B cell (primary cell): ENCODE measurements at regions of chr11 and their contacts with region 1.

Region 1: DNA sequence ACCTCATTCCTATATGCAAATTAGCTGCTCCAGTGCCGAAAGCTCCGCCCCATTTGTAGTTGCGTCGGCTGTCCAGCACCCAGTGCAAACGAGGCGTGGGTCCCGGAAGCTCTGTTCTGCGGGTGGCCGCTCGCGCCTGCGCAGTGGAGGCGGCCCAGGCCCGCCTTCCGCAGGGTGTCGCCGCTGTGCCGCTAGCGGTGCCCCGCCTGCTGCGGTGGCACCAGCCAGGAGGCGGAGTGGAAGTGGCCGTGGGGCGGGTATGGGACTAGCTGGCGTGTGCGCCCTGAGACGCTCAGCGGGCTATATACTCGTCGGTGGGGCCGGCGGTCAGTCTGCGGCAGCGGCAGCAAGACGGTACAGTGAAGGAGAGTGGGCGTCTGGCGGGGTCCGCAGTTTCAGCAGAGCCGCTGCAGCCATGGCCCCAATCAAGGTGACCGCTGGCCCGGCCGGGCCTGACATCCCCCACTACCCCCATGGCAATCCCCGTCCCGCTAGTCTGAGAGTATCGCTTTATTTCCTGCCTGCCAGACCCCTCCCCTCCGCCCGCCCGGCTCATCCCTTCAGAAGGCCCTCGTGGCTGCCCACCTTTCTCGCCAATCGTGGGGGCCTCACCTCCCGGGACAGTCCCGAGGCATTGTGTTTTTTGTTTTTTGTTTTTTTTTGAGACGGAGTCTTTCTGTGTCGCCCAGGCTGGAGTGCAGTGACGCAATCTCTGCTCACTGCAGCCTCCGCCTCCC is at the start of gene PRDX5:
- DNase-seq: peak; percentile 98
- ATAC-seq: peak; percentile 79
- H3K4me3 ChIP-seq: peak within 1 kb of the TSS; percentile 76 to 95 (median 81)
- H3K4me3 Mint-ChIP-seq: peak within 1 kb of the TSS; percentile 98
- H3K27ac ChIP-seq: peak within 1 kb of the TSS; percentile 99 to 100
- H3K27ac Mint-ChIP-seq: peak within 1 kb of the TSS; percentile 100
- H3K4me1 ChIP-seq: peaks cover 8 to 26% of the 10 kb centered on the region in 2 donors
- H3K4me1 Mint-ChIP-seq: peaks cover 32% of the 10 kb centered on the region
- H3K27me3 ChIP-seq: no peaks in the 10 kb centered on the region
- H3K27me3 Mint-ChIP-seq: no peaks in the 10 kb centered on the region
- CTCF ChIP-seq: peak; percentile 39
- total RNA-seq, gene PRDX5: 50.4 and 56.3 TPM in 2 replicates

Region 2: GRCh38 chr11:64284048-64284961 is 33.8 kb before region 1 on chr11 and contains the start of gene BAD:
- CTCF ChIA-PET with region 1: interaction called, 5 read pairs
- POLR2A ChIA-PET with region 1: interaction called, 14 read pairs
- intact Hi-C with region 1: loop called (anchors 1 kb)
- DNase-seq: peak; percentile 96
- ATAC-seq: peak; percentile 77
- H3K4me3 ChIP-seq: peak within 1 kb of the TSS; percentile 61 to 97 (median 90)
- H3K4me3 Mint-ChIP-seq: peak within 1 kb of the TSS; percentile 90
- H3K27ac ChIP-seq: peak within 1 kb of the TSS; percentile 100
- H3K27ac Mint-ChIP-seq: peak within 1 kb of the TSS; percentile 96
- H3K4me1 ChIP-seq: peaks cover 13 to 18% of the 10 kb centered on the region in 2 donors
- H3K4me1 Mint-ChIP-seq: peaks cover 20% of the 10 kb centered on the region
- H3K27me3 ChIP-seq: no peaks in the 10 kb centered on the region
- H3K27me3 Mint-ChIP-seq: no peaks in the 10 kb centered on the region
- CTCF ChIP-seq: no peak
- total RNA-seq, gene BAD: 24.0 and 25.0 TPM in 2 replicates

Region 3: DNA sequence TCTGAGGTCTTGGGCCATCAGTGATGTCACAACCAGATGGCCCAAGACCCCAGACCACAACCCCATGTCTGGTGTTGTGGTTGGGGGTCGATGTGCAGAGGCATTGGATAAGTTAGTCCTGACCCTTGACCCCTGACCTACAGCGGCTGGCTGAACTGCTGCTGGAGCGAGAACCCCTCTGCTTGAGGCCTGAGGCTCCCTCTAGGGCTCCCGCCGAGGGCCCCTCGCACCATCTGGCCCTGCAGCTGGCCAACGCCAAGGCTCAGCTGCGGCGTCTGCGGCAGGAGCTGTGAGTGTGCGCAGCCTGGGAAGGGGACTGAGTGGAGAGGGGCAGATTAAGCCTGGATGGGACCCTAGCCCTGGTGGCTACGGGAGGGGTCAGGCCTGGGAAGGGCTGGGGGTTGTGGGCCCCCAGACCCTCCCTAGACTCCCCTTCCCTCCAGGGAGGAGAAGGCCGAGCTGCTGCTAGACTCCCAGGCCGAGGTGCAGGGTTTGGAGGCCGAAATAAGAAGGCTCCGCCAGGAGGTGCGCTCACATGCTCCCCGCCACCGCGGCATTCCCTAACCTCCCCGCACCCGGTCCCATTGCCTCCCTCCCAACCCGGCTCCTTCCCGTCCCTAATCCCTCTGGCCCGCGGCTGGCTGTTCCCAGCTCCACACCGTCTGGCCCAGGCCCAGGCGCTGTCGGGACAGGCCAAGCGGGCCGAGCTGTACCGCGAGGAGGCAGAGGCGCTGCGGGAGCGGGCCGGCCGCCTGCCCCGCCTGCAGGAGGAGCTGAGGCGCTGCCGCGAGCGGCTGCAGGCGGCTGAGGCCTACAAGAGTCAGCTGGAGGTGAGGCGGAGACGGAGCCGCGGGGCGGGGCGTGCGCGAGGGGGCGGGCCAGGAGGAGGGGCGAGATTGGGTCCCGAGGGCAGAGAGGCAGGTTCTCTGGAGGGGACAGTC is 24.0 kb after region 1 on chr11:
- CTCF ChIA-PET with region 1: interaction called, 63 read pairs
- POLR2A ChIA-PET with region 1: interaction called, 50 read pairs
- intact Hi-C with region 1: loop called (anchors 1 kb)
- DNase-seq: peak; percentile 88
- ATAC-seq: peak; percentile 46
- H3K4me3 ChIP-seq: peak overlapping the region in 2 of 5 experiments; percentile 15 to 19
- H3K4me3 Mint-ChIP-seq: peak overlapping the region; percentile 89
- H3K27ac ChIP-seq: peak overlapping the region in 1 of 2 donors; percentile 12
- H3K27ac Mint-ChIP-seq: no peak overlapping the region
- H3K4me1 ChIP-seq: peaks cover 30 to 39% of the 10 kb centered on the region in 2 donors
- H3K4me1 Mint-ChIP-seq: peaks cover 50% of the 10 kb centered on the region
- H3K27me3 ChIP-seq: no peaks in the 10 kb centered on the region
- H3K27me3 Mint-ChIP-seq: no peaks in the 10 kb centered on the region
- CTCF ChIP-seq: peak; percentile 43

Region 4: GRCh38 chr11:64448599-64449556 is 130.8 kb after region 1 on chr11:
- CTCF ChIA-PET with region 1: interaction called, 28 read pairs
- POLR2A ChIA-PET with region 1: no interaction called
- intact Hi-C with region 1: loop called (anchors 1 kb)
- DNase-seq: peak; percentile 80
- ATAC-seq: peak; percentile 61
- H3K4me3 ChIP-seq: peak overlapping the region; percentile 52 to 92 (median 55)
- H3K4me3 Mint-ChIP-seq: peak overlapping the region; percentile 94
- H3K27ac ChIP-seq: peak overlapping the region; percentile 39 to 83
- H3K27ac Mint-ChIP-seq: peak overlapping the region; percentile 83
- H3K4me1 ChIP-seq: peaks cover 25 to 34% of the 10 kb centered on the region in 2 donors
- H3K4me1 Mint-ChIP-seq: peaks cover 34% of the 10 kb centered on the region
- H3K27me3 ChIP-seq: no peaks in the 10 kb centered on the region
- H3K27me3 Mint-ChIP-seq: no peaks in the 10 kb centered on the region
- CTCF ChIP-seq: peak; percentile 76

Region 5: GRCh38 chr11:64703048-64703447 is 384.9 kb after region 1 on chr11:
- CTCF ChIA-PET with region 1: interaction called, 11 read pairs
- POLR2A ChIA-PET with region 1: no interaction called
- intact Hi-C with region 1: no loop called
- DNase-seq: no peak
- ATAC-seq: no peak
- H3K4me3 ChIP-seq: no peak overlapping the region
- H3K4me3 Mint-ChIP-seq: no peak overlapping the region
- H3K27ac ChIP-seq: no peak overlapping the region
- H3K27ac Mint-ChIP-seq: no peak overlapping the region
- H3K4me1 ChIP-seq: no peaks in the 10 kb centered on the region
- H3K4me1 Mint-ChIP-seq: no peaks in the 10 kb centered on the region
- H3K27me3 ChIP-seq: peaks cover 0 to 11% (median 5%) of the 10 kb centered on the region in 4 experiments
- H3K27me3 Mint-ChIP-seq: peaks cover 41% of the 10 kb centered on the region
- CTCF ChIP-seq: no peak